Astrocyte of the cerebellum (primary cell): ENCODE measurements at regions of chr19 and their contacts with region 1.

Region 1: DNA sequence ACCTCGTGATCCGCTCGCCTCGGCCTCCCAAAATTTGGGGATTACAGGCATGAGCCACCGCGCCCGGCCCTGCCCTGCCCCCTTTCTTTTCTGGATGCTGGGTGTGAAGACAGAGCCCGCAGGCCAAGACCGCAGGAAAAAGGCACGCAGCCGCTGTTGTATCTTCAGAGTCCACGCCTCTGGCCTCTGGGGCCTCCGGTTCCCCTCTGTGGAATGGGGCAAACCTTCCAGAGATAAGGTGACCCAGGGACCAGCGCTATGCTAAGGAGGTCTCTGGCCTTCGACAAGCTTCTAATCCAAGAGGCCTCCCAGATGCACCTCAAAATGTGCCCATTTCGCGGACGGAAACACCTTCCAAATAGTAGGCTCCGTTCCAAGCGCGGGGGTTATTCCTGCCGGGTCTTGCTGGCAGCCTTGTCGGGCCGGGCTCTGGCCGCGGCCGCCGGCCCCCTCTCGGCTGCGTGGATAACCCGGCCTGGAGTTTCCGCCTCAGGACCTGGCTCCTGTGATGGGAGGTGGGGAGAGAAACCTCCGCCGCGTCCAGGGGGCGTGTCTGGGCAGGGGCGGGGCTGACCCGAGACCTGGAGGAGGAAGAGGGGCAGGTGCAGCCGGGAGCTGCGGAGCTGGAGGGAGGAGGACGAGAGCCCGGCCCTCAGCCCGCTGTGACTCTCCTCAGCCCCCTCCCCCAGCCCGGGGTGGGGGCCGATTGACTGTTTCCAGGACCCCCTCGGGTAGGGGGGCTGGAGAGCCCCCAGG is 13.1 kb downstream of the TJP3 start:
- DNase-seq: peak; percentile 54
- H3K4me3 ChIP-seq: no peak overlapping the region
- CTCF ChIP-seq: no peak

Region 2: DNA sequence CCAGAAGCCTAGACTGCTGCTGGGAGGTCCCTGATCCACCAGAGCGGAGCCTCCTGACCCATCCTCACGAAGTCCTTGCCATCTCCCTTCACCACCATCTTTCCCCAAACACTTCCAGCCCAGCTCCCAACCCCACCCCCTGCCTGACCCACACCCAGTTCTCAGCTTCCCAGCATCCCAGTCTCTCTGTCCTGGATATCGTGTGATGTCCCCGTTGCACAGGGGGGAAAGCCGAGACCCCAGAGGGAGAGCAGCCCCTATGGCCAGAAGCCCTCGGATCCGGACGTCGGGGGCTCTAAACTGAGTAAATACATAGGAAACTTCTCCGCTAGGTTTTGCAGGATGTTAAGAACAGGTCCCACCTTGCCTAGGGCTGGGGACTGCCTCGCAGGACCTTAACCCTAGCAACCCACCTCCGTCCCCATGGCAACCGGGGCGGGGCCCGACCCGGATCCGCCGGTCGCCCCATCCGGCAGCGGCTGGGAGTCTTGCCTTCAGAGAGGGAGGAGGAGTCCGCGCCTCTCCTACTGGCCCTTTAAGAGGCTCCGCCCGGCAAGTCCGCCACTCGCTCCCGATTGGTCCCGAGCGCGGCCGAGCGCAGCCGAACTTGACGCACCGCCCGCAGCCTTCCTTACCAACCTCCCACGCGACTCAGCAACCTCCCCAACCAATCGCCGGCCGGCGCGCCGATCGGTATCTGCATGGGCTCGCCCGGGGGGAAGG is 149.0 kb before region 1 on chr19:
- in situ Hi-C with region 1: no loop called
- DNase-seq: peak; percentile 99
- H3K4me3 ChIP-seq: peak overlapping the region; percentile 44
- CTCF ChIP-seq: no peak

Region 3: DNA sequence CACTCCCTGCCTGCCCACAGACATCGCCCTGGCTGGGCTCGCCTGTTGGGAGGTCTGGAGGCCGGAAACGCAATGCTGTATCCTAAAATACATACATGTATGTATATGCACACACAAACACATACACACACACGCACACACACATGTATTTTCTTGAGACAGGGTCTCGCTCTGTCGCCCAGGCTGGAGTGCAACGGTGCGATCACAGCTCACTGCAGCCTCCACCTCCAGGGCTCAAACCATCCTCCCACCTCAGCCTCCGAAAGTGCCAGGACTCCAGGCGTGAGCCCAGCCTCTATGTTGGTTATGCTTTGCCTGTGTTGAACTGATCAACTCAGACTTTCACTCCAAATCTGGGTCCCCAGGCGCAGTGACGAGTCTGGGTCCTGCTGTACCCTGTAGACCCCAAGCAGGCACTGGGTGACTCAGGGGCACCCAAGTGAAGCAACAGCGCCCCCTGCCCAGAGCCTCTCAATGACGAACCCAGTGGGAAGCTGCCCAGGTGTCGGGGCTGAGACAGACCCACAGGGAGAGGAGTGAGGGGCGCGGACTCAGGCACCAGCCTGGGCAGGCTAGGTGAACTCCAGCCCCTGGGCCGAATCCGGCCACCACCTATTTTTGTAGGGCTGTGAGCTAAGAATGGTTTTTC is 67.3 kb before region 1 on chr19:
- in situ Hi-C with region 1: loop called (anchors 5 kb)
- DNase-seq: no peak
- H3K4me3 ChIP-seq: no peak overlapping the region
- CTCF ChIP-seq: no peak

Region 4: DNA sequence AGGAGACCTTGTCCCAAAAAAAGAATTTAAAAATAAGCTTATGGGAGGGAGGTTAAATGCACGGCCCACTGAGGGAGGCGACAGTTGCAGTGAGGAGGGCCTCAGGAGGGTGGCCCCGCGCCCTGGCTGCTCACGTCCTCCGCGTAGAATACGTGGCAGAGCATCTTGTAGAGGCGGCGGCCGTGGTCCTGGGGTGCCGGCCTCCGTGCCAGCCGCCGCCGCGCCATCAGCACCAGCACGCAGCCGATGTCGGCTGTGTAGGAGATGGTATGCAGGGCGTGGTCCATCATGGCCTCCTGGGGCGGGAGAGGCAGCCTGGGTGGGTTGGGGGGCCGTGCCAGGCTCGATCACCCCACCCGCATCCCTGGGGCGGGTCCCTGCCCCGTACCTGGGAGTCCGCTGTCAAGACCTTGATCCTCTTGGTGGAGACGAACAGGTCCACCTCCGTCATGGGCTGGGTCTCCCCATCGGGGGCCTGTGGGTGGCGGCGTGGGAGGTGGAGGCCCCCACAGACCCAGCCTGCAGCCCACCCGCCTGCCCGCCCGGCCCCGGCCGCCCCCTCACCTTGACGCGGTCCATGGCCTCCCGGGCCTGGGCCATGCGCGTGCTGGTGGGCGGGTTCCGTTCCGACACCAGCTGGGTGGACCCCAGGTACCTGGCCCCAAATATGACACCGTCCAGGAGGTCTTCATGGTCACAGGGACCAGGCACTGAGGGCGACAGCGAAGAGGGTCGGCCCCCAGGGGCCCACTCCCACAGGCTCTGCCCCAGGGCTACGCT is 32.5 kb after region 1 on chr19:
- in situ Hi-C with region 1: no loop called
- DNase-seq: no peak
- H3K4me3 ChIP-seq: no peak overlapping the region
- CTCF ChIP-seq: no peak